Activated CD4-positive, alpha-beta T cell treated with anti-CD3 and anti-CD28 coated beads, Interleukin-2, amount 10 ng/mL, durations not matched to agents 24 days and 14 days (primary cell): ENCODE measurements at regions of chr4 and their contacts with region 1.

Region 1: DNA sequence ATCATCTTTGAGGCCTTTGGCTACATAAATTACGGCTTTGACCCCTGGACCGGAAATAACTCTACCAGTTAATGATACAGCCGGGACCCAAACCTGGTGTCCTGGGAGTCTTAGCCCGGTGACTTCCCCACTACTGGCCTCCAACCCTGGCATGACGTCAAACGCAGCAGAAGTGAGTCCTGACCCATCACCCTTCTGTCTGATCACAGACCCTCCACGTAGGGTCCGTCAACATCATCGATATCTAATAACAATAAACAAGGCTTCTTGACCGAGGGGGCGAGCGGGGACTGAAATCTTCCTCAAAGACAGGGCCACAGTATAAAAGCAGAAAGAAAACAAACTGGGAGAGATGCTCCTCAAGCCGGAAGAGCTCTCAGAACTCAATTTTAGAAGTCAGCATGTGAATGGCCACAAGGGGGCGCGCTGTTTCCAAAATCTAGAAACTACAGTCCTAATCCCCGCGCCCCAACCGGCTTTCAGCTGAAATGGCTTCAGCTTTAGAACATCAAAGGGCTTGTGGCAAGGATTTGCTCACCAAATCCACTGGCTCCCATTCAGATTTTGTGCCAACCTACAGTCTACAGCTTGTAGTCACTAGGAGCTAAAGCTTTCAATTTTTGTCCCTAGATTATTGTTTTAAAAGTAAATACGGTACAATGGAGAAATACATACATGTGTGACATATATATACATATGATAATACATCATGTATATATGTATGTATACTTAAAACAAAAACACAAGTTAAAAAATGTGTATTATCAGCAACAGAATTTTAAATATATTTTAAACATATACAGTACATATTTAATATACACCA is 46.4 kb upstream of the ENPP6 start:
- DNase-seq: peak; percentile 97
- H3K4me3 Mint-ChIP-seq: peak overlapping the region; percentile 34
- H3K27ac Mint-ChIP-seq: peak overlapping the region; percentile 84
- H3K4me1 Mint-ChIP-seq: peaks cover 48% of the 10 kb centered on the region
- H3K27me3 Mint-ChIP-seq: no peaks in the 10 kb centered on the region

Region 2: GRCh38 chr4:184250795-184251669 is 13.1 kb before region 1 on chr4:
- intact Hi-C with region 1: loop called (anchors 1 kb)
- DNase-seq: peak; percentile 83
- H3K4me3 Mint-ChIP-seq: no peak overlapping the region
- H3K27ac Mint-ChIP-seq: peak overlapping the region; percentile 89
- H3K4me1 Mint-ChIP-seq: peaks cover 15% of the 10 kb centered on the region
- H3K27me3 Mint-ChIP-seq: no peaks in the 10 kb centered on the region

Region 3: DNA sequence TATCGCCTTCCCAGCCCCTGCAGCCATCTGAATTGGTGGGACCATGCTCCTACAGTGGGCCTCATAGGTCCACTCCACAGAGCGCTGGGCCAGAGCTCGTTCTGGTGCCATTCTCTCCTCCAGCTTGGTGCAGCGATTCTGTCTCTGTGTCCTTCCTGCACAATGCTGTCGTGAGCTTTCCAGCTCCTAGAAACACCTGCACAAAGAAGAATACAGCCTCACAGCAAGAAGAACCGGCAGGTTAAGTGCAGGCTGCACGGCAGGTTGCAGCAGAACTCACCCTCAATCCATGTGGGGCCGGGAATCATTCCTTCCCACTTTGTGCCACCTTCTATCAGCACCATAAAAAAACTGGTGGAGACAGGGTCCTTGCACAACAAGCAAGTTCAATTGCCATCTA is 54.7 kb after region 1 on chr4:
- intact Hi-C with region 1: loop called (anchors 2 kb)
- DNase-seq: peak; percentile 56
- H3K4me3 Mint-ChIP-seq: peak overlapping the region; percentile 21
- H3K27ac Mint-ChIP-seq: peak overlapping the region; percentile 93
- H3K4me1 Mint-ChIP-seq: peaks cover 50% of the 10 kb centered on the region
- H3K27me3 Mint-ChIP-seq: no peaks in the 10 kb centered on the region

Region 4: DNA sequence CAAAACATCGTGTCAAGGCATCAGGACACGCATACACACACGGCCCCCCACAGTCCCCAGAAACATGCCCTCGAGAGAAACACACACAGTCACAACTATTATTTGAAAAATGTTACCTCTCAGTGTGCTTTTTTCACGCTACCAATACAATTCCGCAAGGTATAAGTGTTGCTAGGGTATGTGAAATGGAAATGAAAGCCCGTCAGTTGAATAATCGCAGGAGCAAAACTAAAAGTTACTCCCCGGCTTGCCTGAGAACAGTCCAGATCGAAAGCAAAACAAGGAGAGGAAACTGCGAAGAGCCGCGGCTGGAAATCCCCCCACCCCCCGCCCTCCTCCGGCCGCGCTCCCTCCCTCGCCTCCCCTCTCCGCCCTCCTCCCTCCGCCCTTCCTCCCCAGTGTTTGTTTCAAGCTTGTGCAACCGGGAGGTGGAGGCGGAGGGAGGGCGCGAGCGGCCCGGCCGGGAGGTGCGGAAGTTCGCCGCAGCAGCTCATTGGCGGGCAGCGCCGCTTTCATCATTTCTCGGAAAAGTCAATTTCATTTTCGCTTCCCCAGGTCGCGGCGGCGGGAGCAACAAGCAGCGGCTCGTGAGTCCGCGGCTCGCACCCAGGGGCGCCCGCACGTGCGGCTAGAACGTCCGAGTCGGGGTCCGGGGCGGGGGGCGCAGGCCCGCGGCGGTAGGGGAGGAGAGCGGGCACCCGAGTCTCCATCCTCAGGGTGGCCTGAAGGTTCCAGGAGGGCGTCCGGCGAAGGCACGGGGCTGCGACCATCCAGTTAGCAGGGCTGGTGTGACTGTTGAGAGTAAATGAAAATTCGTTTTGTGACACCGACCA is 210.4 kb after region 1 on chr4 and contains the start of gene IRF2:
- intact Hi-C with region 1: loop called (anchors 1 kb)
- DNase-seq: peak; percentile 98
- H3K4me3 Mint-ChIP-seq: peak within 1 kb of the TSS; percentile 99
- H3K27ac Mint-ChIP-seq: peak within 1 kb of the TSS; percentile 98
- H3K4me1 Mint-ChIP-seq: peaks cover 52% of the 10 kb centered on the region
- H3K27me3 Mint-ChIP-seq: no peaks in the 10 kb centered on the region
- total RNA-seq, gene IRF2: 48.7 and 50.0 TPM in 2 replicates

Region 5: GRCh38 chr4:184500748-184501589 is 236.8 kb after region 1 on chr4:
- intact Hi-C with region 1: no loop called
- DNase-seq: no peak
- H3K4me3 Mint-ChIP-seq: no peak overlapping the region
- H3K27ac Mint-ChIP-seq: no peak overlapping the region
- H3K4me1 Mint-ChIP-seq: peaks cover 16% of the 10 kb centered on the region
- H3K27me3 Mint-ChIP-seq: no peaks in the 10 kb centered on the region

Region 6: DNA sequence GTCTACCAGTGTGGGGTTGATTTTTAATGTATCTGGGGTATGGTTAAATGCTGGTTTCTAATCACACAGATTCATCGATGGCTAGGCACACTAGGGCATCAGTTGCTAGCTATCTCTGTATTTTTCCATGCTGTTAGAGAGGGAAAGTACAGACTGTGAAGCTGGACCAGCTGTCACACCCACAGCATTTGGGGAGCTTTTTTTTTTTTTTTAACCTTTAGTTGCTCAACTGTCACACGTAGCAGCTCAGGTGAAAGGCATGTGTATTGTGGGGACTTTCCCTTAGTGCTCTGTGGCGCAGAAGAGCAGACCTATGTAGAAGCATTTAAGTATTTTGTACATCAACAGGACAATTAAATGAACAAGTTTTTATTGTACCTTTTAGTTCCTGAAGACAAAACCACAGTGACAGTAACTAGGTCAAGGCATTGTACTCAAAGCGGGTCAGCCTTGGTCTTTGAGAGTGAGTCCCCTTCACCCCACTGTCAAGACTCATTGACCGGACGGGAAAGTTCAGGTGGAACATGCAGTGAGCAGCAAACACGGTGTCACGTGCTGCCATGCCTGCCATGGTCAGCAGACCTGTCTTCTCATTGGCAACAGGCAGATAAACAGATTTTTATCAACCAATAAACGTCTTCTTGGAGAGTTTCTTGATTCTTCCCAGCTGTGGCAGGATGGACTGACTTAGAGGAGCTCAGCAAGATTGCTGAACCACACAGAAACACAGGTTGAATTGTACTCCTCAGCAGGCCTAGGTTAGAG is 319.8 kb after region 1 on chr4:
- intact Hi-C with region 1: loop called (anchors 5 kb)
- DNase-seq: peak; percentile 68
- H3K4me3 Mint-ChIP-seq: peak overlapping the region; percentile 19
- H3K27ac Mint-ChIP-seq: peak overlapping the region; percentile 75
- H3K4me1 Mint-ChIP-seq: peaks cover 23% of the 10 kb centered on the region
- H3K27me3 Mint-ChIP-seq: no peaks in the 10 kb centered on the region

Region 7: GRCh38 chr4:184762100-184762499 is 498.0 kb after region 1 on chr4:
- intact Hi-C with region 1: loop called (anchors 1 kb)
- DNase-seq: peak; percentile 90
- H3K4me3 Mint-ChIP-seq: peak overlapping the region; percentile 71
- H3K27ac Mint-ChIP-seq: peak overlapping the region; percentile 93
- H3K4me1 Mint-ChIP-seq: peaks cover 19% of the 10 kb centered on the region
- H3K27me3 Mint-ChIP-seq: no peaks in the 10 kb centered on the region